Endothelial cell of umbilical vein (primary cell): ENCODE measurements at regions of chr2 and their contacts with region 1.

Region 1: DNA sequence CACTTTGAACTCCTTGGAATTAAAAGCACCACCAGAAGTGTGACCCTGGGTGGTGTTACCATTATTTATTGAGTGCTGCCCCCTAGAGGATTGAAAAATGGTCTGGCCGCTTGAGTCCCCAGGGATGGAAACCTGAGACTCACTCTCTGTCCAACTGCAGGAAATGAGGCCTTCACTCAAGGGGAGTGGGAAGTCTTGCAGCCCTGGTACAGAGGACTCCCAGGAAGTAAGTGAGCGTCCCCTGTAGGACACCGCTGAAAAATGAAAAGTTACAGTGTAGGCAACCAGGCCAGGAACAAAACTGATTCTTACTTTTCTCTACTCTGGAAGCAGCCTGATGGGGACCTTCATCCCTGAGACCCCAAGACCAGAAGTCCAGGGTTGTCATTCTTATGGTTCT is 2.2 kb upstream of the NRP2 start:
- DNase-seq: peak; percentile 79
- H3K4me3 ChIP-seq: no peak overlapping the region
- H3K27ac ChIP-seq: no peak overlapping the region
- H3K4me1 ChIP-seq: peaks cover 27% of the 10 kb centered on the region
- H3K27me3 ChIP-seq: no peaks in the 10 kb centered on the region
- CTCF ChIP-seq: peak; percentile 67 to 72
- POLR2A ChIP-seq: no peak

Region 2: DNA sequence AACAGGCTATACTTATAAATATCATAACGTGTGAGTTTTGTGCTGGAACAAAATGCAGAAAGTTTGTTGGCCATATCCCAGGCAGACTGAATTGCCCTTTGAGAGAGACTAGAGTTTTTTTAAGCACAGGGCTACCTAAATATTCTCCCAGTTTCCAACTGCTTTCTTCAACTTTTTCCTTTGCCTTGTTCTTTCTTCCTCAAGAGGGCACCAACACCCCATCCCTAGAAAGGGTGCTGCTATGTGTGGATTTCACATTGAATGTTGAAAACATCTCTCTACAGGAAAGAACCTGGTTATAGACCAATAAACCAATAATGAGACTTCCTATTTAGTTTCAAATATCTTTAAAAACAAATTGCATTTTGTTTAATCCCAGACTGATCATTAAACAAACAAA is 1655.6 kb before region 1 on chr2:
- CTCF ChIA-PET with region 1: interaction called, 16 read pairs
- POLR2A ChIA-PET with region 1: no interaction called
- dilution Hi-C with region 1: no loop called
- intact Hi-C with region 1: loop called (anchors 1 kb)
- DNase-seq: peak; percentile 81
- H3K4me3 ChIP-seq: no peak overlapping the region
- H3K27ac ChIP-seq: no peak overlapping the region
- H3K4me1 ChIP-seq: peaks cover 13% of the 10 kb centered on the region
- H3K27me3 ChIP-seq: no peaks in the 10 kb centered on the region
- CTCF ChIP-seq: peak; percentile 54 to 59
- POLR2A ChIP-seq: no peak

Region 3: DNA sequence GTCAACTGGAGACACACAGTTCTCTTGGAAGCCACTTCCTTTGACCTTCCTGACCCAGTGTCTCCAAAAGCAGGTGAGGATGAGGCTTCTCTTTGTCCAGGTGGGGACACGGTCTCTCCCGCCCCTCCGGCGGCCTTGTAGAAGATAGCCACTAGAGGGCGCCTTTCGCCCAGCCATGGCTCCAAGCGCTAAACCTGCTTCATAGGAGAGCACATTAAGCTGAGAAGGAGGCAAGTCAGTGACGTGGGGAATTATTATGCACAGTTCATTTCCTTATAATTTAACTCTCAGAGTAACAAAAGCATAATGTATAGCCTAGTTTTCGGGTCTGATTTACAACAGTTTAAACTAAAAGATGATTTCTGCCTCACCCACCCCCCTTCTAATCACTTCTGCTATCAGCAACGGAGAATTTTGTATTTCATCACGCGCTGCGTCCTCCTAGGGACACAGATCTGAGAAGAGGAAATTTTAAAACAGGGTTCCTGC is 1534.8 kb before region 1 on chr2:
- CTCF ChIA-PET with region 1: interaction called, 46 read pairs
- POLR2A ChIA-PET with region 1: no interaction called
- dilution Hi-C with region 1: no loop called
- intact Hi-C with region 1: loop called (anchors 1 kb)
- DNase-seq: peak; percentile 78
- H3K4me3 ChIP-seq: peak overlapping the region in 2 of 3 experiments; percentile 20 to 46
- H3K27ac ChIP-seq: no peak overlapping the region
- H3K4me1 ChIP-seq: peaks cover 4% of the 10 kb centered on the region
- H3K27me3 ChIP-seq: peaks cover 0 to 6% of the 10 kb centered on the region in 2 experiments
- CTCF ChIP-seq: peak; percentile 89 to 91
- POLR2A ChIP-seq: no peak

Region 4: DNA sequence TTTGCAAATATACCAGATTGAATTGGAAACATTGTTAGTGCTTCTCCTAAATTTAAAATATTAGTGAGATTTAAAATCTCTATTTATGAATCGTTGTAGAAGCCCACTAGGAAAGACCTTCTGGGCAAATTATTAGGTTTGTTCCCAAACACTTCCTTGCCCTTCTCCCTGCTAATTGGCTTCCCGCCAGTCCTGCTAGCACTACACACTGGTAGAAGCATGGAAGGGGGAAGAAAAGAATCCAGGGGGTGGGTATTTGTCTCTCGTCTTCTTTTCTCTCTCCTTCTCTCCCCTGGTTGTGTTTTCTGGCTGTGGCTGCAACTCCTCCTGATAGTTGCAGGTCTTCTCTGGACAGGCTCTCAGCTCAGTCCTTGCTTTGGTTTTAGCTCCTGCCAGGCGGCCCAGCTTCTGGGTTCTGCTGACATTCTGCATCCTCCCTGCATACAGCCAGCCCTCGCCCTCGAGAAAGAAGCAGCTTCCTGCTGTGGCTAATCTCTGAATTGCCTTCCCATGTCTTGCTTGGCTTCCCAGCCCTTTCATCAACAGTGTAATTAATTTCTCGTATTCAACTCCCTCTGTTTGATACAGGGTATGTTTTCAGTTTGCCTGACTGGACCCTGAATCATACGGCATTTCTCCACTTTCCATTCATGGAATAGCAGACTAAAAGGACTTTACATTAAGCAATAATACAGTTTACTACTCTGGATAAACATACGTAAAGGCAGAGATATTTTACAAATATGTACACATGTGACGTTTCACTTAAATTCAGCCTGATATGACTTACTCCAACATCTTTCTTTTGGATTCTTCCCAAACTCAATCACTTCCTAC is 1141.7 kb before region 1 on chr2:
- CTCF ChIA-PET with region 1: no interaction called
- POLR2A ChIA-PET with region 1: interaction called, 4 read pairs
- dilution Hi-C with region 1: no loop called
- intact Hi-C with region 1: loop called (anchors 2 kb)
- DNase-seq: peak; percentile 93
- H3K4me3 ChIP-seq: peak overlapping the region in 2 of 3 experiments; percentile 6 to 51
- H3K27ac ChIP-seq: peak overlapping the region; percentile 81
- H3K4me1 ChIP-seq: peaks cover 32% of the 10 kb centered on the region
- H3K27me3 ChIP-seq: no peaks in the 10 kb centered on the region
- CTCF ChIP-seq: no peak
- POLR2A ChIP-seq: no peak

Region 5: GRCh38 chr2:204885747-204886146 is 794.3 kb before region 1 on chr2:
- CTCF ChIA-PET with region 1: interaction called, 13 read pairs
- POLR2A ChIA-PET with region 1: no interaction called
- dilution Hi-C with region 1: no loop called
- intact Hi-C with region 1: loop called (anchors 1 kb)
- DNase-seq: peak; percentile 16
- H3K4me3 ChIP-seq: no peak overlapping the region
- H3K27ac ChIP-seq: no peak overlapping the region
- H3K4me1 ChIP-seq: no peaks in the 10 kb centered on the region
- H3K27me3 ChIP-seq: no peaks in the 10 kb centered on the region
- CTCF ChIP-seq: no peak
- POLR2A ChIP-seq: no peak

Region 6: DNA sequence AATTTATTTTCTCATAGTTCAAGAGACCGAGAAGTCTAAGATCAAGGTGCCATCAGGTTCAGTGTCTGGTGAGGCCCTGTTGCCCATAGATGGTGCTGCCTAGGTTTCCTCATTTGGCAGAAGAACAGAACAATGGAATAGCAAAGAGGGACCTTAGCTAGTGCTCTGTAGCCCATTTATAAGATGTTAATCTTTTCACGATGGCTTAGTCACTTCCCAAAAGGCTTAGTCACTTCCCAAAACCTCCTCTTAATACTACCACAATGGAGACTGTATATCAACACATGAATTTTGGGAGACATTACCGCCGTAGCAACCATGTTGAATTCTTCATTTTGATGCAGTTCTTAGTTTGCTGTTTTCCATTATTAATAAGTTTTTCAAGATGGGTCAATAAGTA is 244.1 kb before region 1 on chr2:
- CTCF ChIA-PET with region 1: interaction called, 3 read pairs
- POLR2A ChIA-PET with region 1: no interaction called
- dilution Hi-C with region 1: no loop called
- intact Hi-C with region 1: loop called (anchors 2 kb)
- DNase-seq: peak; percentile 84
- H3K4me3 ChIP-seq: no peak overlapping the region
- H3K27ac ChIP-seq: peak overlapping the region; percentile 65
- H3K4me1 ChIP-seq: peaks cover 9% of the 10 kb centered on the region
- H3K27me3 ChIP-seq: no peaks in the 10 kb centered on the region
- CTCF ChIP-seq: peak in 1 of 2 donors; percentile 1
- POLR2A ChIP-seq: no peak

Region 7: DNA sequence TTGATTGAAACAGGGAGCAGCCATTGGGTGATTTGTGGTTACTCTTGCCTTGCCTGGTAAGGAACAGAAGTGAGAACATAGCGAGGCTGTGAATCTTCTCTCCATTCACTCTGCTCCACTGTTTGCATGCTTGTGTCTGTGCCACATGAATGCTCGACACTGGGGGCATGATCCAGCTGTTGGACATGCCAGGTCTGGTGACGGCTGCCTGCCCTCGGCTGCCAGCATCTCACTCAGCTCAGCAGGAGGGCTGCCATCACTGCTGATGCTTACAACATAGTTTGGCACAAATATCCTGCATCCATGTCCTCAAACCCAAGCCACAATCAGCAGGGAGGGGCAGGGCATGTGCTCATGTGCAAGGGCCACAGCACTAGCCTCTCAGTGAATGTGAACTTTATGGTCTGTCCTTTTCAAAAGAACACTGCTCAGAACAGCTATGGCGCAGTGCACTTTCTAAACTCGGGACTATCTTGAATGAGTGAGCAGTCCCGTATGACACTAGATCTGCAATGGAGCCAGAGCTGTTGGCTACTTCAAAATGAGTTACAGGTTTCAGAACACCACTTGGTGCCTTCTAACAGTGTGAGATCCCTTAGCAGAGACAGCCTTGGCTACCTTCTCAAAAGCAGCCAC is 128.5 kb after region 1 on chr2:
- CTCF ChIA-PET with region 1: interaction called, 4 read pairs
- POLR2A ChIA-PET with region 1: no interaction called
- dilution Hi-C with region 1: no loop called
- intact Hi-C with region 1: loop called (anchors 1 kb)
- DNase-seq: no peak
- H3K4me3 ChIP-seq: no peak overlapping the region
- H3K27ac ChIP-seq: no peak overlapping the region
- H3K4me1 ChIP-seq: no peaks in the 10 kb centered on the region
- H3K27me3 ChIP-seq: peaks cover 0 to 10% of the 10 kb centered on the region in 2 experiments
- CTCF ChIP-seq: no peak
- POLR2A ChIP-seq: no peak